Naive thymus-derived CD4-positive, alpha-beta T cell (primary cell): ENCODE measurements at regions of chr7 and their contacts with region 1.

Region 1: GRCh38 chr7:100586266-100587025 is at the start of gene FBXO24:
- DNase-seq: peak; percentile 91 to 100 (median 99)
- ATAC-seq: peak; percentile 91
- H3K4me3 ChIP-seq: peak within 1 kb of the TSS; percentile 94
- H3K4me3 Mint-ChIP-seq: peak within 1 kb of the TSS; percentile 95 to 100 (median 99)
- H3K27ac ChIP-seq: peak within 1 kb of the TSS; percentile 90
- H3K27ac Mint-ChIP-seq: peak within 1 kb of the TSS in 8 of 9 donors; percentile 94 to 99 (median 98)
- H3K4me1 ChIP-seq: peaks cover 22 to 28% of the 10 kb centered on the region in 2 donors
- H3K4me1 Mint-ChIP-seq: peaks cover 20 to 42% (median 30%) of the 10 kb centered on the region in 7 donors
- H3K27me3 ChIP-seq: no peaks in the 10 kb centered on the region
- H3K27me3 Mint-ChIP-seq: peaks cover 0 to 22% (median 4%) of the 10 kb centered on the region in 5 donors
- total RNA-seq, gene FBXO24: 0.75 to 3.1 (median 1.7) TPM

Region 2: DNA sequence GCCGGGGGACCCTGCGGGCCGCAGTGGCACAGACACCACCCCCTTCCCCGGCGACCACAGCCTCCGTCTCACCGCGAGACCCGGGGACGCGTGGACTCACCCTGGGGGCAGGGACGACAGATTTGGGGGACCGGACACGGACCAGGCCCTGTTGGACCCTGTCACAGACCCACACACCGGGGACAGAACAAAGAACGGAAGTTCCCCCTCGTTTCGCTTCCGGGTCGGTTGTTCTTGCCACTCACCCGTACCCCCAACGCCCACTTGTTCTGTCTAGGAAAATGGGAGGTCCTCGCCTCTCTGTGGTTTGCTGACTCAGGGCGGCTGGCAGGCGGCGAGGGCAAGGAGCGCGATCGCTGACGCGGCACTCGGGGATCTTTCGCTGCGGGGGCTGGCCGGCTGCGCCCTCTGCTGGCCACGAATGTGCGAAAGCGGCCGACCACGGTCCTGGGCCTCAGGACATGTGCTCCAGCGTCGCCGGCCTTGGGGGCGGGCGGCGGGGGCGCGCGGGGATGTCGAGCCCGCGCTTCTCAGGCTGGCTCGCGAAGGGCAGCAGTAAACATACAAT is 504.8 kb before region 1 on chr7 and contains the start of gene ZNF3:
- CTCF ChIA-PET with region 1: no interaction called
- POLR2A ChIA-PET with region 1: no interaction called
- intact Hi-C with region 1: loop called in 1 of 2 experiments (anchors 5 kb)
- DNase-seq: peak; percentile 87 to 98 (median 97)
- ATAC-seq: peak; percentile 94
- H3K4me3 ChIP-seq: peak within 1 kb of the TSS; percentile 78
- H3K4me3 Mint-ChIP-seq: peak within 1 kb of the TSS; percentile 89 to 96 (median 92)
- H3K27ac ChIP-seq: peak within 1 kb of the TSS; percentile 82
- H3K27ac Mint-ChIP-seq: peak within 1 kb of the TSS; percentile 64 to 98 (median 91)
- H3K4me1 ChIP-seq: peaks cover 5 to 18% of the 10 kb centered on the region in 2 donors
- H3K4me1 Mint-ChIP-seq: peaks cover 26 to 46% (median 41%) of the 10 kb centered on the region in 7 donors
- H3K27me3 ChIP-seq: no peaks in the 10 kb centered on the region
- H3K27me3 Mint-ChIP-seq: peaks cover 0 to 19% (median 0%) of the 10 kb centered on the region in 5 donors
- total RNA-seq, gene ZNF3: 29.1 to 48.0 (median 35.0) TPM

Region 3: DNA sequence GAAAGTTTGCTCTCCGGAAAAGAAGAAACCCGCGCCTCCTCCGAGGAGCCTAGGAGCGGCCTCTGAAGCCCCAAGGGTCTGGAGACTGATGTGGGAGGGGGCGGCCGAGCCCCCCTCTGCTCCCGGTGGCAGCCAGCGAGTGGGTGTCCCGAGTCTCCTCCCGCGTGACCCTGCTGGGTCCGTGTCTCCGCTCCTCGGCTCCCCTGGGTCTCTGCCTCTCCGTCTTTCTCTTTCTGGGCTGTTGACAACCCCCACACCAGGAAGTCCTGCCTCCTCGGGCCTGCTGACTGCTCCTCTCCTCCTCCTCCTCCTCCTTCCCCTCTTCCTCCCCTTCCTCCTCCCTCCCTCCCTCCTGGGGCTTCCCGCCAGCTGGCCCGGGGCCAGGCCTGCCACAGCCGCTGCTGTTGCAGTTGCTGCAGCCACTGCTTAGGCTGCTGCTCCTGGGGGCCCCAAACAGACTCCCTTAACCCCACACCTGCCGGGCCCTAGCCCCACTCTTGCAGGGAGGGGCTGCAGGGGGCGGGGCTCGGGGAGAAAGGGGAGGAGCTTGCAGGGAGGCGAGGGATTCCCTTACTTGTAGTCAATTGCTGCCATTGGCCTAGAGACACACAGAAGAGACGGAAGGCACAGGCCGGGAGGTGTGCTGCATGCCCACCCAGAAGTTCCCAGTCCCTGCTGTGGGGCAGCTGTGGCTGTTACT is 107.3 kb before region 1 on chr7 and contains the start of gene TSC22D4:
- CTCF ChIA-PET with region 1: interaction called, 6 read pairs
- POLR2A ChIA-PET with region 1: interaction called, 11 read pairs
- intact Hi-C with region 1: loop called (anchors 1 kb)
- DNase-seq: peak; percentile 82 to 96 (median 95)
- ATAC-seq: peak; percentile 83
- H3K4me3 ChIP-seq: peak within 1 kb of the TSS; percentile 97
- H3K4me3 Mint-ChIP-seq: peak within 1 kb of the TSS; percentile 92 to 100 (median 98)
- H3K27ac ChIP-seq: peak within 1 kb of the TSS; percentile 87
- H3K27ac Mint-ChIP-seq: peak within 1 kb of the TSS; percentile 80 to 98 (median 93)
- H3K4me1 ChIP-seq: peaks cover 42 to 51% of the 10 kb centered on the region in 2 donors
- H3K4me1 Mint-ChIP-seq: peaks cover 25 to 62% (median 38%) of the 10 kb centered on the region in 7 donors
- H3K27me3 ChIP-seq: no peaks in the 10 kb centered on the region
- H3K27me3 Mint-ChIP-seq: peaks cover 0 to 2% (median 0%) of the 10 kb centered on the region in 5 donors
- total RNA-seq, gene TSC22D4: 75.6 to 124 (median 115) TPM

Region 4: DNA sequence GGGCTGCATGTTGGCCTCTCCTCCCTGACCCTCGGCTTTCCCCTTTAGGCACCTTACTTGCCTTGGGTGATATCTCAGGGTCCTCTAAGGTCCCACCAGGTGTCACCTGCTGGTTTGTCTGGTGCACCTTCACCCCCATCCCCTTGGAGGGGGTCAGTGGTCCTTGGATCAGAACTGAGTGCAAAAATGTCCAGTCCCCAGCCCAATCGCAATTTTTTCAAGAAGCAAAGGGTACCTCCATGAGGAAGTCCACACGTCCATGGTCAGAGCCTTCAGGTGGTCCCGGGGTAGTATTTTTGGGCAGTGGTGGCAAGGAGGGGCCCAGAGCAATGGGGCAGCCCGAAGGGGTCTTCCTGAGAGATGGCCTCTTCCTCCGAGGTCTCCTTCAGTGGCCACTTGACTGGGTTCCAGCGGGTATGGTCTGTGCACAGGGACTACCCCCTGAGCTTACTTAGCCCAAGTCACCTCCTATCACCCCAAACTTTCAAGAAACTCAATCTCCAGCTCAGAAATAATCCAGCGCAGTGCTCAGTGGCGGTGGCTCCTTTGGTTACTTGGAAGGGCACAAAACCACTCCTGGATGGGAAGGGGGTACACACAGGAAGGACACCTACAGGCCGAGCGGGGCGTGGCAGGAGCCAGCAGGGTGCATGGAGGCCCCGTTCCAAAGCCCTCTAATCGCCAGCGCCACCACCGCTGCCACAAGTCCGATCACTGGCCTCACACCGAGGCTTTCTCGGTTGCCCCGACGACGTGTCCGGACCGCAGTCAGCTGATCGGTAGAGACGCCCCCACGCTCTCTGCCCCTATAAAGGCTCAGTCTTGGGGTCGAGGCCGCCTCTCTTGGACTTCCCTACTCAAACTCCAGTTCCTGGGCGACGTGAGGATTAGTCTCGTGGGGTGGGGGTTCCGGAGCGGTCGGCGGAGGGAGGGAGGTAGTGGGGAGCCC is 17.3 kb before region 1 on chr7:
- CTCF ChIA-PET with region 1: interaction called, 65 read pairs
- POLR2A ChIA-PET with region 1: interaction called, 173 read pairs
- intact Hi-C with region 1: loop called (anchors 1 kb)
- DNase-seq: peak in 5 of 9 donors; percentile 31 to 47 (median 38)
- ATAC-seq: peak; percentile 45
- H3K4me3 ChIP-seq: peak overlapping the region; percentile 51
- H3K4me3 Mint-ChIP-seq: peak overlapping the region; percentile 3 to 78 (median 70)
- H3K27ac ChIP-seq: peak overlapping the region; percentile 59
- H3K27ac Mint-ChIP-seq: peak overlapping the region; percentile 62 to 92 (median 83)
- H3K4me1 ChIP-seq: peaks cover 25 to 32% of the 10 kb centered on the region in 2 donors
- H3K4me1 Mint-ChIP-seq: peaks cover 12 to 49% (median 30%) of the 10 kb centered on the region in 7 donors
- H3K27me3 ChIP-seq: no peaks in the 10 kb centered on the region
- H3K27me3 Mint-ChIP-seq: peaks cover 0 to 4% (median 0%) of the 10 kb centered on the region in 5 donors

Region 5: DNA sequence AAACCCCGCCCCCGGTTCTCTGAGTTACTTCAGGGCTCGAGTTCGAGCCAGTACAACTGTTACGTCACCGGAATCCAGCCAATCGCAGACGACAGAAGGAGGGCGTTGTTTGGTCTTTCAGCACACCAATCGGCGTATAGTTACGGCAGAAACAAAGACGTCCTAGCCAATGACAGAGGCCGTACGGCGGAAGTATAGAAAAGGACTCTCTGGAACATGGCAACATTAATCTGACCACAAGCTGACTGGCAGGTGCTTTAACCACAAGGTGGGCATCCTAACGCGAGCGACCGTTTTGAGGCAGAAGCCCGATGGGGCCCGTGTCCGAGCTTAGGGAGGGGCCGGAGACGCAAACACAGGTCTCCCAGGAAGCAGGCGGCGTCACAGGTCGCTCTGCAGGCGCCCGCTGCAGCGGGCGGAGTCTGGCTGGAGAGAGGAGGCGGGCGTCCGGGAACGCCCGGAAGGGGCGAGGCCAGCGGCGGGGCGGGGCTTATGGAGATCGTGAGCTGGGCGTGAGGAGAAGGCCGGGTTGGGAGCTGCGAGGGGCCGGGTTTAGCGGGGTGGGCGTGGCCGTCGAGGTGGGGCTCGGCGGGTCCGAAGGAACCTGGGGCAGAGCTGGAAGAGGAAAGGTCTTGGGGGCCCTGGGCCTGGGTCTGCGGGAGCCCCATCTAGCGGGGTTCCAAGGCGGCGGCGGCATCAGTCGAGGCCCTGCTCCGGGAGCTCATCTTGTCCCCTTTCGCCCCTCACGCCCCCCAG is 25.7 kb after region 1 on chr7 and contains the start of gene MOSPD3:
- CTCF ChIA-PET with region 1: interaction called, 11 read pairs
- POLR2A ChIA-PET with region 1: interaction called, 111 read pairs
- intact Hi-C with region 1: loop called (anchors 1 kb)
- DNase-seq: peak; percentile 97 to 99 (median 98)
- ATAC-seq: peak; percentile 94
- H3K4me3 ChIP-seq: peak within 1 kb of the TSS; percentile 99
- H3K4me3 Mint-ChIP-seq: peak within 1 kb of the TSS; percentile 92 to 99 (median 98)
- H3K27ac ChIP-seq: peak within 1 kb of the TSS; percentile 92
- H3K27ac Mint-ChIP-seq: peak within 1 kb of the TSS; percentile 97 to 100 (median 100)
- H3K4me1 ChIP-seq: peaks cover 10 to 16% of the 10 kb centered on the region in 2 donors
- H3K4me1 Mint-ChIP-seq: peaks cover 18 to 29% (median 24%) of the 10 kb centered on the region in 7 donors
- H3K27me3 ChIP-seq: no peaks in the 10 kb centered on the region
- H3K27me3 Mint-ChIP-seq: peaks cover 0 to 8% (median 0%) of the 10 kb centered on the region in 5 donors
- total RNA-seq, gene MOSPD3: 8.8 to 54.9 (median 13.1) TPM

Region 6: GRCh38 chr7:100680167-100680575 is 93.7 kb after region 1 on chr7:
- CTCF ChIA-PET with region 1: interaction called, 6 read pairs
- POLR2A ChIA-PET with region 1: interaction called, 37 read pairs
- intact Hi-C with region 1: no loop called
- DNase-seq: no peak
- ATAC-seq: no peak
- H3K4me3 ChIP-seq: no peak overlapping the region
- H3K4me3 Mint-ChIP-seq: peak overlapping the region in 8 of 10 donors; percentile 12 to 75 (median 38)
- H3K27ac ChIP-seq: peak overlapping the region; percentile 53
- H3K27ac Mint-ChIP-seq: peak overlapping the region in 8 of 9 donors; percentile 33 to 90 (median 81)
- H3K4me1 ChIP-seq: peaks cover 0 to 22% of the 10 kb centered on the region in 2 donors
- H3K4me1 Mint-ChIP-seq: peaks cover 21 to 50% (median 30%) of the 10 kb centered on the region in 7 donors
- H3K27me3 ChIP-seq: no peaks in the 10 kb centered on the region
- H3K27me3 Mint-ChIP-seq: no peaks in the 10 kb centered on the region

Region 7: GRCh38 chr7:101059627-101059942 is 473.1 kb after region 1 on chr7:
- CTCF ChIA-PET with region 1: interaction called, 10 read pairs
- POLR2A ChIA-PET with region 1: no interaction called
- intact Hi-C with region 1: no loop called
- DNase-seq: no peak
- ATAC-seq: no peak
- H3K4me3 ChIP-seq: no peak overlapping the region
- H3K4me3 Mint-ChIP-seq: no peak overlapping the region
- H3K27ac ChIP-seq: no peak overlapping the region
- H3K27ac Mint-ChIP-seq: peak overlapping the region in 2 of 9 donors; percentile 11 to 52
- H3K4me1 ChIP-seq: no peaks in the 10 kb centered on the region
- H3K4me1 Mint-ChIP-seq: peaks cover 0 to 5% (median 0%) of the 10 kb centered on the region in 7 donors
- H3K27me3 ChIP-seq: no peaks in the 10 kb centered on the region
- H3K27me3 Mint-ChIP-seq: peaks cover 35 to 69% (median 62%) of the 10 kb centered on the region in 5 donors